ENCODE measurements at regions of chr1 and their contacts with region 1.

Region 1: GRCh38 chr1:97192872-97193572 is 471.4 kb downstream of the PTBP2 start:
- DNase-seq: peak; percentile 68 to 96
- H3K4me3 ChIP-seq: no peak overlapping the region
- H3K27ac ChIP-seq: peak overlapping the region; percentile 60
- H3K4me1 ChIP-seq: peaks cover 16% of the 10 kb centered on the region
- H3K27me3 ChIP-seq: no peaks in the 10 kb centered on the region
- CTCF ChIP-seq: no peak; the same call in 1 of the 2 replicates

Region 2: GRCh38 chr1:96865731-96866685 is 327.0 kb before region 1 on chr1:
- CTCF ChIA-PET with region 1: no interaction called
- POLR2A ChIA-PET with region 1: no interaction called
- intact Hi-C with region 1: no loop called
- DNase-seq: peak in 1 of 2 experiments; percentile 58
- H3K4me3 ChIP-seq: no peak overlapping the region
- H3K27ac ChIP-seq: no peak overlapping the region
- H3K4me1 ChIP-seq: no peaks in the 10 kb centered on the region
- H3K27me3 ChIP-seq: no peaks in the 10 kb centered on the region
- CTCF ChIP-seq: no peak

Region 3: GRCh38 chr1:96966536-96967138 is 226.4 kb before region 1 on chr1:
- CTCF ChIA-PET with region 1: no interaction called
- POLR2A ChIA-PET with region 1: no interaction called
- intact Hi-C with region 1: loop called (anchors 10 kb)
- DNase-seq: peak; percentile 57 to 74
- H3K4me3 ChIP-seq: peak overlapping the region; percentile 42; the same call in 1 of the 2 replicates
- H3K27ac ChIP-seq: no peak overlapping the region
- H3K4me1 ChIP-seq: 0 out of 2 replicates have a peak, but pooled peaks cover 3% of the 10 kb centered on the region
- H3K27me3 ChIP-seq: no peaks in the 10 kb centered on the region
- CTCF ChIP-seq: peak; percentile 99

Region 4: GRCh38 chr1:97163591-97164275 is 29.3 kb before region 1 on chr1:
- CTCF ChIA-PET with region 1: no interaction called
- POLR2A ChIA-PET with region 1: no interaction called
- intact Hi-C with region 1: no loop called
- DNase-seq: no peak
- H3K4me3 ChIP-seq: no peak overlapping the region
- H3K27ac ChIP-seq: no peak overlapping the region
- H3K4me1 ChIP-seq: no peaks in the 10 kb centered on the region
- H3K27me3 ChIP-seq: no peaks in the 10 kb centered on the region
- CTCF ChIP-seq: no peak

Region 5: GRCh38 chr1:97581614-97582051 is 388.6 kb after region 1 on chr1:
- CTCF ChIA-PET with region 1: no interaction called
- POLR2A ChIA-PET with region 1: no interaction called
- intact Hi-C with region 1: loop called (anchors 5 kb)
- DNase-seq: peak; percentile 40 to 74
- H3K4me3 ChIP-seq: no peak overlapping the region
- H3K27ac ChIP-seq: peak overlapping the region; percentile 7; the same call in 1 of the 2 replicates
- H3K4me1 ChIP-seq: no peaks in the 10 kb centered on the region
- H3K27me3 ChIP-seq: no peaks in the 10 kb centered on the region
- CTCF ChIP-seq: no peak